OCI-LY7 (cell line): ENCODE measurements at regions of chr15 and their contacts with region 1.

Region 1: GRCh38 chr15:99213187-99213811 is 36.1 kb downstream of the TTC23 start:
- DNase-seq: peak; percentile 58
- H3K4me3 ChIP-seq: no peak overlapping the region
- H3K27ac ChIP-seq: no peak overlapping the region
- H3K4me1 ChIP-seq: no peaks in the 10 kb centered on the region
- CTCF ChIP-seq: peak; percentile 93

Region 2: GRCh38 chr15:99104788-99105513 is 108.3 kb before region 1 on chr15 and contains the start of gene SYNM:
- CTCF ChIA-PET with region 1: no interaction called
- POLR2A ChIA-PET with region 1: interaction called, 3 read pairs
- intact Hi-C with region 1: loop called (anchors 5 kb)
- DNase-seq: peak; percentile 38
- H3K4me3 ChIP-seq: peak within 1 kb of the TSS; percentile 51
- H3K27ac ChIP-seq: no peak within 1 kb of the TSS
- H3K4me1 ChIP-seq: peaks cover 7% of the 10 kb centered on the region
- CTCF ChIP-seq: peak; percentile 61
- total RNA-seq, gene SYNM: 0.41 and 0.49 TPM in 2 replicates